ENCODE measurements at regions of chr9 and their contacts with region 1.

Region 1: DNA sequence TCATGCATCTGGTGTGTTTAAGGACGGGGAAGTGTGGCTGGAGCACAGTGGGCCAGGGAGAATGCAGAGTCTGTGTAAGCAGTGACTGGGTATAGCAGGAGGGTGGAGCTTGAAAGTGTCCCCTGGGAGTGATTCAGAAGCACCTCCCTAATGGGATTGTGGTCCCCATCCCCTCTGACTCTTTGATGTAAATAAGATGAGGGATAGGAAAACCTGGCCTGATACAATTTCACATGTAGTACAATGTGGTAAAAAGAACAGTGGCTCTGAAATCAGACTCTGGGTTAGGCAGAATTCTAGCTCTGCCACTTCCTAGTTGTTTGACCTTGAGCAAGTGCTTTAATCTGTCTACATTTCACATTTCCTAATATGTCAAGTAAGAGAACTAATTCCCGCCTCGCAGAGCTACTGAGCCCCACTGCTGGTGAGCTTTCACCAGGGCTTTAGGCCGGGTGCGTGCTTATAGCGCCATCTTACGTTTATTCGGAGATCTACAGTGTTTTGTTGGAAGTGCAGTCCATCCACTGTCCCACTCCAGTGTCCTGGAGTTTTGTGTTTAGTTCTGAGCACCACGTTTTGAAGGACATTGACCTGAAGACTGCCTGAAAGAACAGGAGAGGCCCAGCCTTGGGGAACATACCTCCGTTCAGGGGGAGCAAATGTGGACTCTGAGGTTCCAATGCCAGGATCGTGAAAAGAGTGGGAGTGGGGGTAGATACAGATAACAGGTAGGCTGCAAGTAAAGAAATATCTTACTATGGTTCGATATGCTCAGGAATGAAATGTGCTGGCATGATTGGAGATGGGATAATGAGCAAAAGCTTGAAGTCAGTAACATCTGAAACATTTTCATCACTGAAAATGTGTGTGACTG is 51.2 kb upstream of the TESK1 start:
- DNase-seq: peak; percentile 76
- H3K4me3 ChIP-seq: no peak overlapping the region
- H3K27ac ChIP-seq: peak overlapping the region; percentile 24
- H3K4me1 ChIP-seq: peaks cover 6% of the 10 kb centered on the region
- H3K27me3 ChIP-seq: no peaks in the 10 kb centered on the region
- CTCF ChIP-seq: peak; percentile 76 to 79
- POLR2A ChIP-seq: no peak

Region 2: DNA sequence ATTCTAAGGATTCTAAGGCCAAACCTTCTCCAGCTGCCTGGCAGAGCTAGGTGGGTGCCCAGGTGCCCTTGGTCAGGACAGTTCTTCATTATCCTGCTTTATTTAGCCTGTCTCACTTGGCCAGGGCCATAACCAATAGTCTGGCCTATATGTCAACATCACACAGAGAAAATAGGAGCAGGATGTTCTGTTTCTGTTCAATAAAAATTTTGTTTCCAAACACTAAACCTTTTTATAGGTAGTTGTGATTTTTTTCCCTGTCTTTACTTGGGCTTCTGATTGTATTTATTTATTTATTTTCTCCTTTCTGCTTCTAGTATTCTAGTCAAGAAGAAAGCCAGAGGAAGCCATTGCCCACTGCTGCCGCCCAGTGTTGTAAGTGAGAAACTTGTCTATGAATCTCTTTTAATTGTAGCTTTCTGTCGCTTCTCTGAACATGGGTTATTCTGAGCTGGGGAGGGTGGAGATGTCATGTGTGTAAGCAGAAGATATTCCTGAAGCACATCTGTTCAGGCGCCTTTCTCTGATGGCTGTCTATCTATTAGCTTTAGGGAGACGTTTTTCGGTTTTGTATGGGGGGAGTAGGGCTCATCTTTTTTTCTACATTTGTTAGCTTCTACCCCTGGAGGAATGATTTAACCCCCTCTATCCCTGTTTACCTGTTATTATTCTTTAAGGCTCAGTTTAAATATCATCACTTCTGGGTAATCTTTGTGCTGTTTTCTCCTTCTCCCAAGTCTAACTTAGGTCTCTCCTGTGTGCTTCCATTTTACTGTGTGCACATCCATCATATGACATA is 295.0 kb before region 1 on chr9:
- CTCF ChIA-PET with region 1: interaction called, 14 read pairs
- POLR2A ChIA-PET with region 1: no interaction called
- dilution Hi-C with region 1: no loop called
- intact Hi-C with region 1: no loop called
- DNase-seq: peak; percentile 82
- H3K4me3 ChIP-seq: no peak overlapping the region
- H3K27ac ChIP-seq: no peak overlapping the region
- H3K4me1 ChIP-seq: no peaks in the 10 kb centered on the region
- H3K27me3 ChIP-seq: no peaks in the 10 kb centered on the region
- CTCF ChIP-seq: peak; percentile 55 to 67
- POLR2A ChIP-seq: no peak

Region 3: DNA sequence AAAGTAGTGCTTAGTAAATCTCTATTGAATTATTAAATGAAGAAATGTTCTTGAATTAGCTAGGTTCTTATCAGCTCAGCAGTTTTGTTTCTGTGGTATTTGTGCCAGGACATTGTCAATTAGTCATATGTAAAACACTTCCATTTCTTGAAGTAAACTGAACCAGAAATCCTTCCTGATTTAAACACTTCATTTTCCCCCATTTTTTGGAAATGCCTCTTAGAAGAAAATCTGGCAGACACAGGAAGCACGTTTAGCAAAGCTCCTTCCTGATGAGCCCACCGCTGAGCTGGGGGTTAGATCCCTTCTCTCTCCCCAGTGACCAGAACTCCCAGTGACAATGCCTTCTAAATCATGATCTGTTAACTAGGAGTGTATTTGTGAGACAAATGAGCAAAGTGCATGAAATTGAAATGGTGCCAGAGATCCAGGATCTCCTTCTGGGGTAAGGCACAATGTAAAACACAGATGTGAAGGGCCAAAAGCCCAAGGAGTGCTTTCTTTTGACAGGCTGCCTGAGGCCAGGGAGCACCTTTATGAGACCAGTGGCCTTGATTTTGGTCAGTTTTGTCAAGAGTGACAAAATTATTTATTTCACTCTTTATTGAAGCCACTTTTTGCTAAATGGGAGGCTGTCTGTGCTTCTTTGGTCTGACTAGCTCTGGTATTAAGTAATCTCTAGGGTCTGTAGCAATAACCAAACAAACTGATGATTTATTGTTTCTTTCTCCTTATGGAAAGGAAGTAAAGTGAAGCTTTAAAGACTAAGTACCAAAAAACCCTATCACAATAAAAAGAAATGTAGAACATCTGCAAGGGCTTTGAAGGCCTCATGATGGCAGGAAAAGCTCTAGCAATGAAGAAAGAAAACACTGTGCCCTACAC is 89.5 kb before region 1 on chr9:
- CTCF ChIA-PET with region 1: interaction called, 10 read pairs
- POLR2A ChIA-PET with region 1: no interaction called
- dilution Hi-C with region 1: no loop called
- intact Hi-C with region 1: no loop called
- DNase-seq: peak; percentile 65
- H3K4me3 ChIP-seq: no peak overlapping the region
- H3K27ac ChIP-seq: peak overlapping the region; percentile 3
- H3K4me1 ChIP-seq: peaks cover 14% of the 10 kb centered on the region
- H3K27me3 ChIP-seq: peaks cover 0 to 1% of the 10 kb centered on the region in 2 experiments
- CTCF ChIP-seq: no peak
- POLR2A ChIP-seq: no peak

Region 4: DNA sequence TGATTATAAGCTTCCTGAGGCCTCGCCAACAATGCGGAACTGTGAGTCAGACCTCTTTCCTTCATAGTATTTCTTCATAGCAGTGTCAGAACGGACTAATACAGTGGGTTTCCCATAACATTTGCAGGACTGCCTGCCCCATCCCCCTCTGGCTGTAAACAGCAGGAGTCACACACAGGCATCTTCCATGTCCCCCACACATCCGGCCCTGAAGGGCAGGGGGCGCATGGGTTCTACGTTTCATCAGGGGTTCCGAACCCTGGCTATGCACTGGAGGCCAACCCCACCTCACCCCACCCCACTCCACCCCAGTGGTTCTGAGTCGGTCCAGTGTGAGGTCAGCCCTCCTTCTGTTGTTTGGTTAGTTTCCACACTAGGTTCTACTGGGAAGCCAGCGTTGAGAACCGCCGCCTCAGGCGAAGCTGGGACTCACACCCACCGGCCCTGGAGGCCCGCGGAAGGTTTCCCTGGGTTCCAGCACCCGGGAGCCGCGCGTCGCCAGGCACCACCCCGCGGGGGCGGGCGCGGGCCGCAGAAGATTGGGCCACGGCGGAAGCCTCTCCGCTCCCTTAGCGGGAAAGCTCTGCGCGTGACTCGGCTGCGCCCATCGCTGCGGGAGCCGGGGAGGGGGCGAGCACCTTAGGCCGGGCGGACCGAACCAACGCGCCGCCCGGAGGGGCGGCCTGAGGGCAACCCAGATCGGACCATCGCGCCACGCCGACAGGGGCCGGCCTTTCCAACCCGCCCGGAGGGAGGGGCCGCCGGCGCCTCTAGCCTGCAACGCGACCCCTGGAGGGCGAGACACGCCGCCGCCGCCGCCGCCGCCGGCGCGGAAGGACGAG is 64.4 kb before region 1 on chr9 and contains the start of gene RUSC2:
- CTCF ChIA-PET with region 1: interaction called, 71 read pairs
- POLR2A ChIA-PET with region 1: interaction called, 3 read pairs
- dilution Hi-C with region 1: no loop called
- intact Hi-C with region 1: loop called (anchors 1 kb)
- DNase-seq: peak; percentile 88
- H3K4me3 ChIP-seq: peak within 1 kb of the TSS; percentile 62 to 91 (median 66)
- H3K27ac ChIP-seq: peak within 1 kb of the TSS; percentile 96
- H3K4me1 ChIP-seq: peaks cover 10% of the 10 kb centered on the region
- H3K27me3 ChIP-seq: no peaks in the 10 kb centered on the region
- CTCF ChIP-seq: peak; percentile 30 to 38
- POLR2A ChIP-seq: peak; percentile 84
- total RNA-seq, gene RUSC2: 46.2 and 52.1 TPM in 2 replicates

Region 5: GRCh38 chr9:35510745-35511428 is 43.0 kb before region 1 on chr9:
- CTCF ChIA-PET with region 1: interaction called, 111 read pairs
- POLR2A ChIA-PET with region 1: no interaction called
- dilution Hi-C with region 1: no loop called
- intact Hi-C with region 1: loop called (anchors 1 kb)
- DNase-seq: peak; percentile 88
- H3K4me3 ChIP-seq: peak overlapping the region in 1 of 3 experiments; percentile 1
- H3K27ac ChIP-seq: peak overlapping the region; percentile 67
- H3K4me1 ChIP-seq: peaks cover 36% of the 10 kb centered on the region
- H3K27me3 ChIP-seq: no peaks in the 10 kb centered on the region
- CTCF ChIP-seq: peak; percentile 24 to 38
- POLR2A ChIP-seq: no peak

Region 6: GRCh38 chr9:35529161-35529823 is 24.6 kb before region 1 on chr9:
- CTCF ChIA-PET with region 1: interaction called, 83 read pairs
- POLR2A ChIA-PET with region 1: no interaction called
- dilution Hi-C with region 1: no loop called
- intact Hi-C with region 1: no loop called
- DNase-seq: no peak
- H3K4me3 ChIP-seq: no peak overlapping the region
- H3K27ac ChIP-seq: no peak overlapping the region
- H3K4me1 ChIP-seq: peaks cover 15% of the 10 kb centered on the region
- H3K27me3 ChIP-seq: no peaks in the 10 kb centered on the region
- CTCF ChIP-seq: no peak
- POLR2A ChIP-seq: no peak